Activated CD8-positive, alpha-beta T cell treated with anti-CD3 and anti-CD28 coated beads for 36 hours (primary cell): ENCODE measurements at regions of chr12 and their contacts with region 1.

Region 1: DNA sequence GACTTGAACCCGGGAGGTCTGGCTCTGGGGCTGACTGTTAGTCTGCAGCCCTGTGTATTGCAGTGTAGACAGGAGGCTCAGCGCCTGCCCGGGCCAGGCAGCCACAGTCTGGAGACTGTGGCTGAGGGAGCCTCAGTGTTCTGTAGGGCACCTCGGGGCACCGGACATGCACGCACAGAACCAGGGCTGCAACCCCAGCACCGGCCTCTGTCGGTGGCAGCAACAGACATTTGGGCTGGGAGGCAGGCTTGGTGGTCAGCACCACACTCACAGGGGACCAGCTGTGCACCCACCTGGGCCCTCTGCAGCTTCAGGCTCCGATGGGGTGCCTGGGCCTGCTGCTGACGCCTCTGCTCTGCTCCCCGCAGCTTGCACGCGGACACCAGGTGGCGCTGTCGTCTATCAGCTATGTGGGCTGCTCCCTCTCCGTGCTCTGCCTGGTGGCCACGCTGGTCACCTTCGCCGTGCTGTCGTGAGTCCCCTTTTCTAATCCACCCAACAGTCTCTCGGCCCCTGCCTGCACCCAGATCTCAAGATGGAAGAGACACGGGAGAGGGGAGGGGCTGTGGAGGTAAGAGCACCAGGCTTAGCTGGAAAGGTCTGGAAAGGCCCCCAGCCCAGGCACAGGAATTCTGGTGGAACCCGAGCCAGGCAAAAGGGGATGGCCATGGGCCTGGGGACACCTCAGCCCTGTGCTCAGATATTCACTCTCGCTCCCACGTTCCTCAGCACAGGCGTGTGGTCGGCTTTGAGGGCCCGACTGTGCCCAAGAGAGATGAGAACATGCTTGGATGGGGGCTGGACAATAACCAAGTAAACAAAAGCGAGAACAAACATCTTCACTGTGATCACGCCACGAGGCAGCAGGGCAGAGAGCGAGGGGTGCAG is 151.0 kb downstream of the ADGRD1 start:
- DNase-seq: peak; percentile 92
- ATAC-seq: peak; percentile 78
- H3K4me3 Mint-ChIP-seq: no peak overlapping the region
- H3K27ac Mint-ChIP-seq: peak overlapping the region; percentile 66
- H3K4me1 Mint-ChIP-seq: peaks cover 23% of the 10 kb centered on the region
- H3K27me3 Mint-ChIP-seq: peaks cover 5% of the 10 kb centered on the region
- CTCF ChIP-seq: peak; percentile 91

Region 2: DNA sequence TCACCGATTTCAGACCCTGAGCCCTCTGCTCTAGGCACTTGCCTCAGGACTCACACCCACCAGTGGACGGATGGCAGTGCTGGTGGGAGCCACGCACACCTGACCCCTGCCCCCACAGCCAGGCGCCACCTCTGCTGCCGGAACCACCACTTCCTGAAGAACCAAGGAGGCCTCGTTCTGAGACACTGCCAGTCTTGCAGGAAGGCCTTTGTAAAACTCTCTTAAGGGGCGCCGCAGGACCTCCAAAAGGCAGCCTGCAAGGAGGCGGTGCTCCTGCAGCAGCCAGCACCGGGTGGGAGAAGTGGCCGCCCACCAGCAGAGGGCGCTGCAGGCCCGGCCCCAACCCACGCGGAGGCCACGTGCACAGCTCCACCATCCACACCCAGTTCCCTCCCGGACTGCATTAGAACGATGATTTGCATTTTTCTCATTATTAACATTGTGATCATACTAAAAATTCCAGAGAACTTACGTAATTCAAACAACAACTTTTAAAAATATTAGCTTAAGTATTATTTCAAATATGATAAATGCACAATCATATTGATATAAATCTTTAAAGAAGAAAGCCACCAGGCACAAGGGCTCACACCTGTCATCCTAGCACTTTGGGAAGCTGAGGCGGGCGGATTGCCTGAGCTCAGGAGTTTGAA is 278.4 kb before region 1 on chr12:
- CTCF ChIA-PET with region 1: interaction called, 20 read pairs
- POLR2A ChIA-PET with region 1: no interaction called
- intact Hi-C with region 1: no loop called
- DNase-seq: peak; percentile 83
- ATAC-seq: peak; percentile 95
- H3K4me3 Mint-ChIP-seq: no peak overlapping the region
- H3K27ac Mint-ChIP-seq: peak overlapping the region; percentile 48
- H3K4me1 Mint-ChIP-seq: peaks cover 23% of the 10 kb centered on the region
- H3K27me3 Mint-ChIP-seq: no peaks in the 10 kb centered on the region
- CTCF ChIP-seq: peak; percentile 96

Region 3: DNA sequence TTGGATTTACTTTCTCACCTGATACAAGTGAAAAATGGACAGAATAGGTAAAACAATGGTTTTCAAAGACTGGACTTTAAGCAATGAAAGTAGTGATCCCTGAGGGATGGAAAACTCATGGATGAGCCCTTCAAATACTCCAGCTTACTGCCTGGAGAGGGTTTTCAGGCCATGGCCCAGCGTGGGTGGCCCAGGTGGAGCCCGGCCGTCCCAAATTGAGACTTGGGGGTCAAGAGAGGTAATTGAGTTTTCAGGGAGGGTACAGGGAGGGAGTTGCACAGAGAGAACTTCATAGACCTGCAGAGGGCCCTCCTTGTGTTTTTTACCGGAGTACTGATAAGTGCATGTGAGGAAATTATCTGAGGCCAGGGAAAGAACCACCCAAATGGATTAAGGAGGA is 195.6 kb before region 1 on chr12:
- CTCF ChIA-PET with region 1: no interaction called
- POLR2A ChIA-PET with region 1: no interaction called
- intact Hi-C with region 1: no loop called
- DNase-seq: no peak
- ATAC-seq: no peak
- H3K4me3 Mint-ChIP-seq: no peak overlapping the region
- H3K27ac Mint-ChIP-seq: no peak overlapping the region
- H3K4me1 Mint-ChIP-seq: no peaks in the 10 kb centered on the region
- H3K27me3 Mint-ChIP-seq: peaks cover 12% of the 10 kb centered on the region
- CTCF ChIP-seq: no peak

Region 4: DNA sequence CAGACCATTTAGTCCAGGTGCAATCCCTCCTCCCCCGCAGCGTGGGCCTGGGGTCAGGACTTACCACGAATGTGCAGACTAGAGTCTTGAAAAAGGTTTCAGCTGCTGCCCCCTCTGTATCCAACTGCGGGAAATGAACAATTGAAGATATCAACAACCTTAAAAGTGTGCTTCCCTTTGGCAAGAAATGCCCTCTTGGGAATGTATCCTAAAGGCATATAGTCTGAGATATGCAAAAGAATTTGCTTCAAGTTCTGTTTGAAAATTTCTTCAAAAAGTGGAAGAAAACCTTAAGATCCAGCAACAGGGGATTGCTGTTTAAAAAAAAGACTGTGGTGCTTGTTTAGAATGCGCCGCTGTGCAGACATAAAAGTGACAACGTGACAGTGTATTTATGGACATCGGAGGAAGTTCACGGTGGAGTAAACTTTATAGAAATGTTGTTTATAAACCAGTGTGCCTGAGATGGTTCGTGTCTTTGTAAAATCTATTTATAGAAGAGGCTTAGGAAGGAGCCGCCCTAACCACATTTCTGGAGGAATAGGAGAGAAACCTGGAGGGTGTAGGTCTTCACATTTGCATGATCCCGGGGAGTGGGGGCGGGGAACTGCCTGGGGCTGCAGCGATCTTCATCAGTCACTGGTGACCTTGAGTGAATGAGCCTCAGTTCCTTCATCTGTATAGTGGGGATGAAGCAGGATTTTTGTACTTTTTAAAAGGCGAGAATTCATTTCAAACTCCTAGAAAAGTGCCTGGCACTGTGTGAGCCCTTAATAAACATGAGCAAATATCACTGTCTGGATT is 123.6 kb before region 1 on chr12:
- CTCF ChIA-PET with region 1: no interaction called
- POLR2A ChIA-PET with region 1: no interaction called
- intact Hi-C with region 1: no loop called
- DNase-seq: no peak
- ATAC-seq: no peak
- H3K4me3 Mint-ChIP-seq: no peak overlapping the region
- H3K27ac Mint-ChIP-seq: no peak overlapping the region
- H3K4me1 Mint-ChIP-seq: no peaks in the 10 kb centered on the region
- H3K27me3 Mint-ChIP-seq: peaks cover 10% of the 10 kb centered on the region
- CTCF ChIP-seq: no peak

Region 5: DNA sequence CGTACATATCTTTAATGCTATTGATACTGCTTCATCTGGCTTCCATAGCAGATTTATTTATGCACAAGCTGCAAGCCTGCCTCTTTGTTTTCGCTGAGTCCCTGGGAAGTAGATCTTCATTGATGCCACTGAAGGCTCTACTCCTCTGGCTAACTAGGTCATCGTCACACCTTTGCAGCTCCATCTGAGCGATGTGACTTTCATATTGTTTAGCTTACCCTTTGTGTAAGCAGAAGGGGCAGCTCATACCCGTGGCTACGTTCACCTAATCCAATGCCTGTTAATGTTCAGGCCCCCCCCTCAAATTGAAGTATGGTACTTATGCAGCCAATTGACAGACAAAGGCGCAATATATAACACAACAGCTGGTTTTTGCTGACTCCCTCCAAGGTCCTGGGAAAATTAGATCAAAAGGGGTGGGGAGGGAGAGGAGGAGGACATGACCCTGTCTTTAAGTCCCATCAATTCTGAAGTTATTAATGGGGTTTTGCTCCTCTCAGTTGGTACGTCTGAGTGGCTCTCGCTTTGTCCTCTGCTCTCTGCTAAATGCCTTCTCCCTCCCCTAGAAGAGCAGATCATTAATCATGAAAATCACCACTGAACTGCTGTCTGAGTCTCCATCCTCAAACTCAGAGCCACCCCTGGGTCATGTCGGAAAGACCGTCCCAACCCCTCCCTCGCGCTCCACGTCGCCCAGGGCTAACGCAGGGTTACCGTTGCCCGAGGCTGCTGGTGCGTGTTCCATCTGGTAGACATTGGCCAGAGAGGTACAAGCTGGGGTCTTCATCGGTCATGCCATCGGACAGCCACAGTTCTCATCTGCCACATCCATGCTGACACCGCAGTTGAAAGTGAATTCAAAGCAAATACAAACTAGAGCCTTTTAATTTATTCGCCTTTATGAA is 22.2 kb before region 1 on chr12:
- CTCF ChIA-PET with region 1: no interaction called
- POLR2A ChIA-PET with region 1: no interaction called
- intact Hi-C with region 1: no loop called
- DNase-seq: no peak
- ATAC-seq: no peak
- H3K4me3 Mint-ChIP-seq: no peak overlapping the region
- H3K27ac Mint-ChIP-seq: no peak overlapping the region
- H3K4me1 Mint-ChIP-seq: no peaks in the 10 kb centered on the region
- H3K27me3 Mint-ChIP-seq: peaks cover 3% of the 10 kb centered on the region
- CTCF ChIP-seq: no peak

Region 6: DNA sequence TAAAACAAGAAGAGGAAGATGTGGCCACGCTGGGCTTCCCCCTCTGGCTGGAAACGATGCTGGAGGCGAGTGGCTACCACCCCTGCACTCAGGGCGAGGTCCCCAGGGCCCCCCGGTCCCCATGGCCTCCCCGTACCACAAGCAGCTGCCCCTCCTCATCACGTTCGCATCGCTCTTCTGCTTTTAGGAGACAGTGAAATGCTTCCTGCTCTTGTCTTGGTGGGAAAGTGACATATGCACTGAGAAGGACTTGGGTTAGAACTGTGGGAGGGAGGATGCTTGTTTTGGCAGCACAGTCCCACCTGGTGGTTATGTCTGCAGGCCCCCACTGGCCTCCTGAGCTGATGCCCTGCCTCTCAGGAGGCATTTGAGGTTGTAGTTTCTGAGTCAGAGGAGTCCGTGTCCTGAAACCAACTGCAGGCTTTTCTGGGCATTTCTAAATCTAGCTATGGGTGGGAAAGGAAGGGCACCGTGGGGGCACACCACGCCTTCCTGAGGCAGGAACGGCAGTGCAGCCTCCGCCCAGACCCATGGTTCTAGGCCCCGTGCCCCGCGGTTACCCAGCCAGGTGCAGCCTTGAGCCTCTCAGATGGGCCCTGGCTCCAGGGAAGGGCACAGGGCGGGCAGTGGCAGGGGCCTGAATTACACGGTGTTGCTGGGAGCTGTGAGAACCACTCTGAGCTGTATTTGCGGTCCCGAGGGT is 11.7 kb before region 1 on chr12:
- CTCF ChIA-PET with region 1: interaction called, 29 read pairs
- POLR2A ChIA-PET with region 1: interaction called, 3 read pairs
- intact Hi-C with region 1: no loop called
- DNase-seq: peak; percentile 83
- ATAC-seq: peak; percentile 81
- H3K4me3 Mint-ChIP-seq: peak overlapping the region; percentile 5
- H3K27ac Mint-ChIP-seq: peak overlapping the region; percentile 69
- H3K4me1 Mint-ChIP-seq: peaks cover 24% of the 10 kb centered on the region
- H3K27me3 Mint-ChIP-seq: peaks cover 7% of the 10 kb centered on the region
- CTCF ChIP-seq: peak; percentile 14

Region 7: DNA sequence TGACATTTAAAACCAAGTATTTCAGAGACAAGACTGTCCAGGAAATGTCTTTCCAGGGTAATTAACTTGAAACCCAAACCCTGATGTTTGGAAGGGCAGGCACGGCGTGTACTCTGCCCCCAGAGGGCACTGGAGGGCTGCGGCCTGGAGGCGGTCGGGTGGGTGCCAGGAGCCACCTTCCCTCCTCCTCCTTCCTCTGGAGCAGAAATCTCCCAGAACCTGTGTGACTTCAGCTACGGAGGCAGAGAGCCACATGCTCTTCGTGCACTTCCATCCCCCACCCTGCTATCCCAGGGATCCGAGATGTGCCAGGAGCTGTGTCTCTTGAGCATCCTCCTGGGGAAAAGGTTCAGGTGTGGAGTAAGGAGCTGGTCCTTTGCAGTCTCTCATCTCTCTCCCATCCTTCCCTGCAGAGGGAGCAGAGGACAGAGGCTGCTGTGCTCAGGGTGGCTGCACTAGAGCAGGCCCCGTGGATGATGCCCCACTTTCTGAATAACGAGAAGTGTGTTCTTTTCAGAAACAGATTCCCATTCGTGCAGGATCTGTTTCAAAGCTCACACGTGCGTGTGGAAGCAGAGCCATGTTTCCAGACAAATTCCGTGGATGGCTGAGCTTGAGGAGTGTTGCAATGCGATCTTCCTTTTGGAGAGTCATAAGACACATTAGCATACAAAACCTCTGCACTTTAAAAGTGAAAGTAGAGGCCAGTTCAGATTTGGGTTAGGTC is 11.8 kb after region 1 on chr12:
- CTCF ChIA-PET with region 1: interaction called, 68 read pairs
- POLR2A ChIA-PET with region 1: interaction called, 3 read pairs
- intact Hi-C with region 1: no loop called
- DNase-seq: no peak
- ATAC-seq: no peak
- H3K4me3 Mint-ChIP-seq: no peak overlapping the region
- H3K27ac Mint-ChIP-seq: no peak overlapping the region
- H3K4me1 Mint-ChIP-seq: peaks cover 3% of the 10 kb centered on the region
- H3K27me3 Mint-ChIP-seq: no peaks in the 10 kb centered on the region
- CTCF ChIP-seq: peak; percentile 31

Region 8: GRCh38 chr12:131124487-131125280 is 20.0 kb after region 1 on chr12:
- CTCF ChIA-PET with region 1: interaction called, 166 read pairs
- POLR2A ChIA-PET with region 1: no interaction called
- intact Hi-C with region 1: no loop called
- DNase-seq: no peak
- ATAC-seq: no peak
- H3K4me3 Mint-ChIP-seq: no peak overlapping the region
- H3K27ac Mint-ChIP-seq: no peak overlapping the region
- H3K4me1 Mint-ChIP-seq: peaks cover 2% of the 10 kb centered on the region
- H3K27me3 Mint-ChIP-seq: no peaks in the 10 kb centered on the region
- CTCF ChIP-seq: no peak

Region 9: GRCh38 chr12:131132118-131132892 is 27.6 kb after region 1 on chr12:
- CTCF ChIA-PET with region 1: interaction called, 166 read pairs
- POLR2A ChIA-PET with region 1: interaction called, 5 read pairs
- intact Hi-C with region 1: no loop called
- DNase-seq: peak; percentile 85
- ATAC-seq: peak; percentile 87
- H3K4me3 Mint-ChIP-seq: no peak overlapping the region
- H3K27ac Mint-ChIP-seq: no peak overlapping the region
- H3K4me1 Mint-ChIP-seq: peaks cover 2% of the 10 kb centered on the region
- H3K27me3 Mint-ChIP-seq: no peaks in the 10 kb centered on the region
- CTCF ChIP-seq: peak; percentile 84

Region 10: GRCh38 chr12:131454418-131455217 is 349.9 kb after region 1 on chr12:
- CTCF ChIA-PET with region 1: interaction called, 15 read pairs
- POLR2A ChIA-PET with region 1: no interaction called
- intact Hi-C with region 1: no loop called
- DNase-seq: peak; percentile 44
- ATAC-seq: peak; percentile 87
- H3K4me3 Mint-ChIP-seq: no peak overlapping the region
- H3K27ac Mint-ChIP-seq: no peak overlapping the region
- H3K4me1 Mint-ChIP-seq: no peaks in the 10 kb centered on the region
- H3K27me3 Mint-ChIP-seq: no peaks in the 10 kb centered on the region
- CTCF ChIP-seq: peak; percentile 45